MCF 10A (cell line): ENCODE measurements at regions of chr2 and their contacts with region 1.

Region 1: DNA sequence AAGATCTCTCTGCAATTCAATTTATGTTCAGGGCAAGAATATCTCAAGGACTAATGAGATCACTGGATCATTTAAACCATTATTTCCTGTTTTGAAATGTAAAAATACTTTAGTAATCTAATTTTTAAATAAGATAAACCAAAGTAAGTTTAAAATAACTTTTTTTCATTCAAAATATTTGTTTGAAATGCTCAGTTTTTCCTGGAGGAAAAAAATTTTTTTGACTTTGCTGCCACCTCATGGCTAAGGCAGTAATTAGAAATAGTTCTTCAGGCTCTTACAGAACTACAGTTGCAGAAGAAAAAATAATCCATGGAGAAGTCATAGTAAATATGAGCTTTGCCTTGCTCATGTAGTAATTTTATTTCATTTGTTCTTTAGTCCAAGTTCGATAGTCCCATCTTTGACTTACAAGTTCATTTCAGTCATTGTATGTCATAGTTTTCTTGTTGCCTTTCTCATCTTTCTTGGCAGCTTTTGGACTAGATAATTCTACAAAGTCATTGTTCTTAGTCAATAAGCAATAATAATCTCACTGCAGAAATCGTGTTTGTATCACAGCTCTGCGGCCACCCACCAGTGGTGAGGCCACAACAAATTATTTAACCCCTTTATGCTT is 127.4 kb downstream of the DPP4 start:
- DNase-seq: peak; percentile 40
- H3K4me3 Mint-ChIP-seq: no peak overlapping the region
- H3K27ac Mint-ChIP-seq: no peak overlapping the region
- H3K4me1 Mint-ChIP-seq: no peaks in the 10 kb centered on the region
- H3K27me3 Mint-ChIP-seq: peaks cover 71% of the 10 kb centered on the region
- CTCF ChIP-seq: peak; percentile 71

Region 2: GRCh38 chr2:161223139-161223732 is 723.4 kb before region 1 on chr2:
- CTCF ChIA-PET with region 1: interaction called, 5 read pairs
- POLR2A ChIA-PET with region 1: no interaction called
- intact Hi-C with region 1: loop called (anchors 10 kb)
- DNase-seq: peak; percentile 51
- H3K4me3 Mint-ChIP-seq: no peak overlapping the region
- H3K27ac Mint-ChIP-seq: no peak overlapping the region
- H3K4me1 Mint-ChIP-seq: peaks cover 6% of the 10 kb centered on the region
- H3K27me3 Mint-ChIP-seq: no peaks in the 10 kb centered on the region
- CTCF ChIP-seq: peak; percentile 61

Region 3: GRCh38 chr2:161580426-161580825 is 366.2 kb before region 1 on chr2:
- CTCF ChIA-PET with region 1: interaction called, 99 read pairs
- POLR2A ChIA-PET with region 1: no interaction called
- intact Hi-C with region 1: no loop called
- DNase-seq: no peak
- H3K4me3 Mint-ChIP-seq: no peak overlapping the region
- H3K27ac Mint-ChIP-seq: no peak overlapping the region
- H3K4me1 Mint-ChIP-seq: no peaks in the 10 kb centered on the region
- H3K27me3 Mint-ChIP-seq: no peaks in the 10 kb centered on the region
- CTCF ChIP-seq: no peak

Region 4: GRCh38 chr2:161596148-161596547 is 350.4 kb before region 1 on chr2:
- CTCF ChIA-PET with region 1: interaction called, 16 read pairs
- POLR2A ChIA-PET with region 1: no interaction called
- intact Hi-C with region 1: no loop called
- DNase-seq: no peak
- H3K4me3 Mint-ChIP-seq: no peak overlapping the region
- H3K27ac Mint-ChIP-seq: no peak overlapping the region
- H3K4me1 Mint-ChIP-seq: no peaks in the 10 kb centered on the region
- H3K27me3 Mint-ChIP-seq: peaks cover 69% of the 10 kb centered on the region
- CTCF ChIP-seq: no peak

Region 5: DNA sequence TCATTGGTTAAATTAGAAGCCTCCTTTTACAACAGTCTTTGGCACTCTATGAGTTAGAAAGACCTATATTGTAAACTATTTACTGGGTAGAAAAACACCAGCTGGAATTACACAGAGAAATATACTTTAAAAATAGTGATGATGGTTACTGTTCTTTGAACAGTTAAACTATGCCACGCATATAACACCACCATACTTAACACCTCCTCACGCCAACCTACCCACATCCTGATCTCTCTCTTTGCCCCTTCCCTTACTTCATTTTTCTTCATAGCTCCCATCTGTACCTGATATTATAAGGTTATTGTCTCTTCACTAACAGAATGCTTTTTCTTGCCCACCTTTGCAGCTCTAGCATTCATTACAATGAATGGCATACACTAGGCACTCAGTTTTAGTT is 46.4 kb before region 1 on chr2:
- CTCF ChIA-PET with region 1: no interaction called
- POLR2A ChIA-PET with region 1: no interaction called
- intact Hi-C with region 1: no loop called
- DNase-seq: no peak
- H3K4me3 Mint-ChIP-seq: no peak overlapping the region
- H3K27ac Mint-ChIP-seq: no peak overlapping the region
- H3K4me1 Mint-ChIP-seq: peaks cover under 1% of the 10 kb centered on the region
- H3K27me3 Mint-ChIP-seq: peaks cover 42% of the 10 kb centered on the region
- CTCF ChIP-seq: no peak

Region 6: GRCh38 chr2:162365392-162365791 is 418.8 kb after region 1 on chr2:
- CTCF ChIA-PET with region 1: no interaction called
- POLR2A ChIA-PET with region 1: no interaction called
- intact Hi-C with region 1: no loop called
- DNase-seq: no peak
- H3K4me3 Mint-ChIP-seq: no peak overlapping the region
- H3K27ac Mint-ChIP-seq: no peak overlapping the region
- H3K4me1 Mint-ChIP-seq: no peaks in the 10 kb centered on the region
- H3K27me3 Mint-ChIP-seq: peaks cover 72% of the 10 kb centered on the region
- CTCF ChIP-seq: no peak